Spleen (tissue), 13 donors: ENCODE measurements at regions of chr21 and their contacts with region 1.

Region 1: DNA sequence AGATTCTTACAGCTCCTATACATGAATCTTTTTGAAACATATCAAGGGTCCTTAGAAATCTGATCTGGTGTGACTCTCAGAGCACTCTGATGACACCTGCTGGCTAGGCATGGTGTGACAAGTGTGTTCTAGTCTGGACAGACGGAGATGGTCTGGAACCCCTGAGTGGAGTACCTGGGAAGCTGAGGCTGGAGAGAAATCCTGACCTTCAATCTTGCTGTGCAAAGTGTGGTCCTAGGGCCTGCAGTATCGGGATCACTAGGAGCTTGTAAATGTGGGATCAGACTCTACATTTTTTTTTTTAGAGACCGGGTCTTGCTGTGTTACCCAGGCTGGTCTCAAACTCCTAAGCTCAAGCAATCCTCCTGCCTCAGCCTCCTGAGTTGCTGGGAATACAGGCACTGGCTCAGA is 78.6 kb upstream of the SOD1 start:
- DNase-seq: no peak
- H3K4me3 ChIP-seq: no peak overlapping the region
- H3K27ac ChIP-seq: no peak overlapping the region
- H3K4me1 ChIP-seq: peaks cover 0 to 3% (median 0%) of the 10 kb centered on the region in 6 donors
- H3K27me3 ChIP-seq: no peaks in the 10 kb centered on the region
- CTCF ChIP-seq: peak; percentile 42 to 79 (median 71)
- POLR2A ChIP-seq: no peak

Region 2: GRCh38 chr21:31198575-31198974 is 382.3 kb before region 1 on chr21:
- intact Hi-C with region 1: loop called (anchors 2 kb)
- DNase-seq: no peak
- H3K4me3 ChIP-seq: no peak overlapping the region
- H3K27ac ChIP-seq: no peak overlapping the region
- H3K4me1 ChIP-seq: peaks cover 0 to 17% (median 8%) of the 10 kb centered on the region in 6 donors
- H3K27me3 ChIP-seq: peaks cover 0 to 4% (median 0%) of the 10 kb centered on the region in 7 donors
- CTCF ChIP-seq: peak in 8 of 11 experiments; percentile 22 to 63 (median 54)
- POLR2A ChIP-seq: no peak